ENCODE measurements at regions of chr4 and their contacts with region 1.

Region 1: DNA sequence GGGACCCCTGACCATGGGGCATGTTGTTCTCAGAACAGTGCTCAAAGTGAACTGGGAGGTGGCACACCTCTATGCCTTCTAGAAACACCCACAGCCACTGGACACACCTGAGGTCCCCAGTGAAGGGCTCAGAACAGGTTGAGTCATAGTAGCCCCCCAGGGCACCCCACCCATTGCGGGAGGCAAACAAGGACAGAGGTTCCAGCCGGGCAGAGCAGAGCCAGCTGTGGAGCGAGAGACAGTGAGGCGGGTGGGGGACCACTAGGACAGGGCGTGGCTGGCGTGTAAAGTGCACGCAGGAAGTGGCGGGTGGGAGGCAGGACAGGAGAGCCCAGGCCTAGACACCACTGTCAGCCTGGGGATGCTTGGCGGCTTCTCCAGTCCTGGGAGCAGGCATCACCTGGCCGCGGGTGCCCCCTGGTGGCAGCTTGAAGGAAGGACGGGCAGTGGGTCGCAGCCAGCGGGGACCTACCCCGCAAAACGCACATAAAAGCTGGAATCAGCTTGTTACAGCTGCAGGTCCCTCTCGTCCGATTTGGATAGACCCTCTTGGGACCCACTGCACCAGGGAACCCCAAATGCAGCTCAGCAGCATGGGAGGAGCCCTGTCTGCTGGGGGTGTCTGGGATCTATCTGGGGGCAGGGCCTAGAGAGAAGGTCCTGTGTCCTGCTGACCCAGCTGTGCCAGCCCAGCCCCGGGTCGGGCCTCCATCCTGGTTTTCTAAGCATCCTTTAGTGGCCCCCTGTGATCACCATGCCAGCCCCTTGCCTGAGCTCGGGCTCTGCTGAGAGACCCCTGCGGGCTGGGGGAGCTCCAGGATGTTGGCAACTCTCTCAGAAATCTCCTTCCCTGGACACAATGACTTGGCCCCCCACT is 57.6 kb downstream of the WFS1 start:
- DNase-seq: peak; percentile 85
- ATAC-seq: peak; percentile 84
- H3K4me3 Mint-ChIP-seq: no peak overlapping the region
- H3K27ac Mint-ChIP-seq: no peak overlapping the region
- H3K4me1 Mint-ChIP-seq: peaks cover 21% of the 10 kb centered on the region
- H3K27me3 Mint-ChIP-seq: peaks cover 17% of the 10 kb centered on the region

Region 2: DNA sequence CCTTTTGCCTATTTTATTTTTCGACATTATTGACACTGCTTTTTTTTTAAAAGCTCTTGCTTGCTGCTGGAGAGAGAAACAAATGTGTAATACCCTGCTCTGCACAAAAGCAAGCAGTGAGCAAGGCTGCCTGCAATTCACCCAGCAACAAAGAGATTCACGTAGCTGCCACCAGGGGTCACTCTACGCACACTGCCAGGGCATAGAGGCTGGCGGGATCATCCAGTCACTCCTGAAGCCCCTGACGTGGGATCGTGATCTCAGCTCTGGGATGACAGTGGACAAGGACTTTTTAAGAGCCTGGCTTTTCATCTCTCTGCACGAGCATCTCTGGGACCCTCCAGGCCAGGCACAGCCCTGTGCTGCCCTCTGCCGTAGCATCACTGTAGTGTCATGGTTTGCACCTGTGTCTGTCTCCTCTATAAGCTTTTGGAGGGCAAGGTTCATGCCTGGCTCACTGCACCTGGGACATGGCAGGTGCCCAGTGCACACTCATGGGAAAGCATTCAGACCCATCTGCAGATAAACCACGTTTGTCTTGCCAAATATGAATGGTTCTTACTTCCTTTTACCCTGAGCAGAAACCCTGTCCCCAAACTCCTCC is 328.8 kb before region 1 on chr4:
- CTCF ChIA-PET with region 1: interaction called, 23 read pairs
- POLR2A ChIA-PET with region 1: interaction called, 3 read pairs
- DNase-seq: peak; percentile 65
- ATAC-seq: peak; percentile 71
- H3K4me3 Mint-ChIP-seq: no peak overlapping the region
- H3K27ac Mint-ChIP-seq: no peak overlapping the region
- H3K4me1 Mint-ChIP-seq: peaks cover 7% of the 10 kb centered on the region
- H3K27me3 Mint-ChIP-seq: no peaks in the 10 kb centered on the region

Region 3: DNA sequence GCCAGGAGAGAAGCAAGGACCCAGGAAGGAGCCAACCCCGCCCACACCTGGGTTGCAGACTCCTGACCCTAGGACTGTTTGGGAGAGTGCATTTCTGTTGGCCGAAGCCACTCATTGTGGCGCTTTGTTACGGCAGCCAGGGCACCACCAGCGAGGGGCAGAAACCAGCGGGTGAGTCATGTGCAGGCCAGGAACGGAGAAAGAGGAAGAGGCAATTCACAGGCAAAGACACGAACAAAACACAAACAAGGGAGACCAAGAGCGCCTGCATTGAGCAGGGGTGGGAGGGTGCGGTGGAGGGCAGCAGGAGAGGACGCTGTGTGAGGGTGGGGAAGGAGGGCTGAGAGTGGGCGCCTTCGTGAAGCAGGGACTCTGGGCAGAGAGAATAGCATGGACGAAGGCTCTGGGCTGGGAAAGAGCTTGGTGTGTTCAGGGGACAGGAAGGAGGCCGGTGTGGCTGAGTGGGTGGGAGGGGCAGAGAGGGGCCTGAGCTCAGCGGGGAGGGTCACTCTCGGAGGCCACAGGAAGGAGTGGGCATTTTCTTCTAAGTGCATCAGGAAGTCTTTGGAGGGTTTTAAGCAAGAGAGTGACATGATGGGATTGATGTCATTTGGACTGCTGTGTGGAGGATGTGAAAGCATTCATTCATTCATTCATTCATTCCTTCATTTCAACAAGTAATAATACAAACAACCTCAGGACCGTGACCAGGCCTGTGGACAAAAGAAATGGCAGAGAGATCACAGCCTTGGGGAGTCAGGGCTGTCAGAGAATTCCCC is 69.8 kb before region 1 on chr4:
- CTCF ChIA-PET with region 1: interaction called, 226 read pairs
- POLR2A ChIA-PET with region 1: no interaction called
- DNase-seq: no peak
- ATAC-seq: no peak
- H3K4me3 Mint-ChIP-seq: no peak overlapping the region
- H3K27ac Mint-ChIP-seq: no peak overlapping the region
- H3K4me1 Mint-ChIP-seq: peaks cover 10% of the 10 kb centered on the region
- H3K27me3 Mint-ChIP-seq: peaks cover 21% of the 10 kb centered on the region

Region 4: GRCh38 chr4:6264225-6264540 is 63.1 kb before region 1 on chr4:
- CTCF ChIA-PET with region 1: interaction called, 46 read pairs
- POLR2A ChIA-PET with region 1: no interaction called
- DNase-seq: peak; percentile 45
- ATAC-seq: peak; percentile 51
- H3K4me3 Mint-ChIP-seq: no peak overlapping the region
- H3K27ac Mint-ChIP-seq: no peak overlapping the region
- H3K4me1 Mint-ChIP-seq: peaks cover 14% of the 10 kb centered on the region
- H3K27me3 Mint-ChIP-seq: peaks cover 31% of the 10 kb centered on the region

Region 5: DNA sequence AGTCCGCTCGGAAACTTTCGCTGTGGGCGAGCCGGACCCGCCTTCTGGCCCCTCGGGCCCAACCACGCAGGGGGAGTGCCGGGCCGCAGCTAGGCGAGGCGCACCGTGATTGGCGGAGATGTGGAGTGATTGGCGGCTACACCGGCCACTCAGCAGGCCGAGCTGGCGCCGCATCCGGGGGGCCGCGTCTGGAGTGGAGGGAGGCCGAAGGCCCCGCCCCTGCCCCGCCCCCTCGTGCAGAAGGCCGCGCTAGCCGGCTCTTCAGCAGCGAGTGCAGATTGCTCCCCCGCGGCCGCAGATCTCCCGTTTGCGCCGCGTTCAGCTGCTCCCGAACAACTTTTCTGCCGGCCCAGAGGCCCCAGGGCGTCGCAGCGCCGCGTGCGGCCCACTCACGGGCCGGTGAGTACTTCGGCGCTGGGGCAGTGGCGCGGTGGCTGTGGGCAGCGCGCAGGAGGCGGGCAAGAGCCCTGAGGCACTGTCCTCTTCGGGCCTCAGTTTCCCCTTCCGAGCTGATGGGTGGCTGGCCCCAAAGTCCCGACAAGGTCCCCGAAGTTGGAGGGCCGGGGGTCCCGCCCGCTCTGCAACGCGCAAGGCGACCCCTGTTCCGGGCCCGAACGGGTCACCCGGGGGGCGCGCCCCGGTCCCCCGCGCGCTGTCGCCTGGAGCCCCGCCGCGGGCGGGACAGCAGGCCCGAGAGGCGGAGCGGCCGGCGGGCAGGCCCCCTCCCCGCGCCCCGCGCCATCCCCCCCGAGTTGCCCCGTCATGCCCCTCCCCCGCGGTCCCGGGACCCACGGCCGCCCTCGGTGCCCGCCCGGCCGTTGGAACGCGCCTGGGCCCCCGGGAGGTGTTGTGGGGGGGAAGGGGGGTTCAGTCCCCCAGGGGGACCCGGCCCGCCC is 57.4 kb before region 1 on chr4 and contains the start of gene WFS1:
- CTCF ChIA-PET with region 1: interaction called, 46 read pairs
- POLR2A ChIA-PET with region 1: no interaction called
- DNase-seq: peak; percentile 96
- ATAC-seq: peak; percentile 100
- H3K4me3 Mint-ChIP-seq: peak within 1 kb of the TSS; percentile 72
- H3K27ac Mint-ChIP-seq: no peak within 1 kb of the TSS
- H3K4me1 Mint-ChIP-seq: peaks cover 23% of the 10 kb centered on the region
- H3K27me3 Mint-ChIP-seq: peaks cover 47% of the 10 kb centered on the region
- total RNA-seq, gene WFS1: 0.97 to 1.3 TPM

Region 6: DNA sequence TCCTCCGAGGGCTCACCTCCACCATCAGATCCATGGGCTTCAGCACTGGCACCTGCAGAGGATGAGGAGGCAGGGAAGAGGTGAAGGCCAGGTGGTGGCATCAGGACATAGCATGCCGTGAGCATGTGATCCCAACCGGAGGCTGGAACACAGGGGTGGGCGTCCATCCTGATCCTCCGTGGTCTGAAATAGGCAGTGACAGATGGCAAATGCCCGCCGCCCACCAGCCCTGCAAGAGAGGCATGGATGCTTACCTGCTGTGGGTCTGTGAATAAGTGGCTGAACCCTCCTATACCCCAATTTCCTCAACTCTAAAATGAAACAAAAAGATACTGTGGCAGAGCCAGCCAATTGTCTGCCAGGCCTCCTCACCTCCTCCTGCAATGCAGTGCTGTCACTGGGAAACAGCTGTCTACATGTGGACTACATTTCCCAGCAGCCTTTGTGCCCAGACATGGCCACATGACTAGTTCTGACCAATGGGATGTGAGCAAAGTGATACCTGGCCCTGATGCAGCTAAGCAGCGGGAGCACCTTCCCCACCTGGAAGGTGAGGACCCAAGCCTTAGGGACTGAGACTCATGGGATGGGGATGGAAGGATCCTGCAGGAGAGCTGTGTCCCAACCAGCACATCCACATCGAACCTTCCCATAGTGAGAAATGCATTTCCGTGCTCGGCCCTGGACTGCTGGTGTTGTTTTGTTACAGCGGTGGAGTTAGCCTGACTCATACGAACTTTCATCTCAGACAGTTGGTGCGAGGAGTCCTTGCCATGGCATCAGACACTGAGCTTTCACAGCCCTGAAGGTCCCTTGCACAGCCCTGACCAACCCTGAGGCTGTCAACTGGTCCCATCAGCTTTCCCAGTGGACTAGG is 45.6 kb after region 1 on chr4:
- CTCF ChIA-PET with region 1: no interaction called
- POLR2A ChIA-PET with region 1: no interaction called
- DNase-seq: peak; percentile 41
- ATAC-seq: peak; percentile 57
- H3K4me3 Mint-ChIP-seq: no peak overlapping the region
- H3K27ac Mint-ChIP-seq: no peak overlapping the region
- H3K4me1 Mint-ChIP-seq: no peaks in the 10 kb centered on the region
- H3K27me3 Mint-ChIP-seq: no peaks in the 10 kb centered on the region

Region 7: GRCh38 chr4:6474107-6474511 is 146.8 kb after region 1 on chr4:
- CTCF ChIA-PET with region 1: no interaction called
- POLR2A ChIA-PET with region 1: no interaction called
- DNase-seq: no peak
- ATAC-seq: no peak
- H3K4me3 Mint-ChIP-seq: no peak overlapping the region
- H3K27ac Mint-ChIP-seq: no peak overlapping the region
- H3K4me1 Mint-ChIP-seq: peaks cover 7% of the 10 kb centered on the region
- H3K27me3 Mint-ChIP-seq: peaks cover 31% of the 10 kb centered on the region

Measured in activated CD8-positive, alpha-beta T cell treated with anti-CD3 and anti-CD28 coated beads, Interleukin-2, amount 10 ng/mL, durations not matched to agents 7 days and 5 days (primary cell).